H1 (cell line): ENCODE measurements at regions of chr14 and their contacts with region 1.

Region 1: GRCh38 chr14:77721437-77721836 is 13.5 kb downstream of the SLIRP start:
- DNase-seq: no peak
- H3K4me3 ChIP-seq: no peak overlapping the region
- H3K27ac ChIP-seq: no peak overlapping the region
- H3K4me1 ChIP-seq: no peaks in the 10 kb centered on the region
- H3K27me3 ChIP-seq: no peaks in the 10 kb centered on the region
- CTCF ChIP-seq: no peak
- EP300 ChIP-seq: no peak
- POLR2A ChIP-seq: no peak
- RAD21 ChIP-seq: no peak

Region 2: GRCh38 chr14:77593501-77593961 is 127.9 kb before region 1 on chr14:
- CTCF ChIA-PET with region 1: no interaction called
- POLR2A ChIA-PET with region 1: no interaction called
- DNase-seq: no peak
- H3K4me3 ChIP-seq: no peak overlapping the region
- H3K27ac ChIP-seq: no peak overlapping the region
- H3K4me1 ChIP-seq: no peaks in the 10 kb centered on the region
- H3K27me3 ChIP-seq: no peaks in the 10 kb centered on the region
- CTCF ChIP-seq: no peak
- EP300 ChIP-seq: no peak
- POLR2A ChIP-seq: no peak
- RAD21 ChIP-seq: no peak

Region 3: DNA sequence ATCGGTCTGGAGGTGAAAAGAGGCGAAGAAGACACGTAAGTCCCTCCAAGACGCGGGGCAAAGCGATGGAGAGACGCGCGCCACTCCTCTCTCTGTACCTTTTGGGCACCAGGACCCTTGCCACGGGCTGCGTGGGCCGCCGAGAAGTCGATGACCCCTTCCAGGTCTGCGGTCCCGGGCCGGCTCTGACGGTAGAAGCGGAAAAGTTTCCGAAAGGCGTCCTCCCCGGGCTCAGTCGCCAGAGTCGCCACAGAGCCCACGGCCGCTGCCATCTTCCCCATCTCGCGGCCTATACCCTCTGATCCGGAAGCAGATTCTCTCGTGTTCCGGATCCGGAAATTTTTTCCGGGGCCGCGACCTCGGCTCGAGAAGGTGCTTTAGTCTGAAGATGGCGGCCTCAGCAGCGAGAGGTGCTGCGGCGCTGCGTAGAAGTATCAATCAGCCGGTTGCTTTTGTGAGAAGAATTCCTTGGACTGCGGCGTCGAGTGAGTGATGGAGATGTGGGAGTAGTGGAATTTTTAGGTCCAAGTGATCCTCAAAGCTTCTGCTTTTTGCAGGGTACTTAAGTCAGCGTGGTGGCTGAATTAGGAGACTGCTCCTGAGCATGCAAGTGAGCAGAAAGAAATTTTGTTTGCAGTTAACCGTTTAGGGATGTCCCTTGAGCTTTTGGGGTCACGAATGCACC is 13.6 kb before region 1 on chr14 and contains the starts of genes ALKBH1 and SLIRP:
- CTCF ChIA-PET with region 1: interaction called, 5 read pairs
- POLR2A ChIA-PET with region 1: interaction called, 15 read pairs
- DNase-seq: peak; percentile 36 to 83
- H3K4me3 ChIP-seq: peak within 1 kb of the TSS; percentile 68 to 98 (median 94)
- H3K27ac ChIP-seq: peak within 1 kb of the TSS; percentile 85
- H3K4me1 ChIP-seq: peaks cover 0 to 2% (median 1%) of the 10 kb centered on the region in 4 experiments; a peak in 2 of 7 replicates
- H3K27me3 ChIP-seq: no peaks in the 10 kb centered on the region
- CTCF ChIP-seq: 0 out of 4 replicates have a peak, but pooled peaks of 1 of the 3 experiments have one; percentile 0
- EP300 ChIP-seq: no peak
- POLR2A ChIP-seq: peak; percentile 93 to 94
- RAD21 ChIP-seq: no peak
- total RNA-seq, gene ALKBH1: 19.9 and 20.0 TPM in 2 replicates
- total RNA-seq, gene SLIRP: 356 and 383 TPM in 2 replicates